Mammary epithelial cell (primary cell): ENCODE measurements at regions of chr1 and their contacts with region 1.

Region 1: DNA sequence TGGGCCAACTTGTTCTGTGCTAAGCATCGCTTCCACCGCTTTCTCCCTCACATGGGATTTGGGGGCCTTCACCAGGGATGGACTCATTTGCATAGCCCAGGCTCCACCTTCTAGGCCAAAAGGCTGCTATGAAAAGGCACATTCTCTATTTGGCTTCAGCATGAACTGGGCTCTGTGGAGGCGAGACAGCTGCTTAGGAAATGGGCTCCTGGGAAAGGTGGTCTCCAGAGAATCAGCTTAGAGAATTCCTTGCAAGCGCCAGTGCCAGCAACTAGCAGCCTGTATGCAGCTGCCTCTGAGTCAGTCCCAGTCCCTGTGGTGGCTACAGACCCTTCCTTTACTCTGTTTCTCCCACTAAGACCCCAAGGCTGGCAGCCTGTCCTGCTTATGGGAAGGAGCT is 214.5 kb downstream of the HIVEP3 start:
- DNase-seq: no peak
- H3K4me3 ChIP-seq: no peak overlapping the region
- H3K27ac ChIP-seq: no peak overlapping the region
- H3K4me1 ChIP-seq: no peaks in the 10 kb centered on the region
- H3K27me3 ChIP-seq: no peaks in the 10 kb centered on the region
- CTCF ChIP-seq: no peak

Region 2: GRCh38 chr1:41731516-41732030 is 27.4 kb after region 1 on chr1:
- CTCF ChIA-PET with region 1: no interaction called
- dilution Hi-C with region 1: no loop called
- in situ Hi-C with region 1: no loop called
- intact Hi-C with region 1: no loop called
- DNase-seq: no peak
- H3K4me3 ChIP-seq: no peak overlapping the region
- H3K27ac ChIP-seq: no peak overlapping the region
- H3K4me1 ChIP-seq: no peaks in the 10 kb centered on the region
- H3K27me3 ChIP-seq: no peaks in the 10 kb centered on the region
- CTCF ChIP-seq: no peak

Region 3: DNA sequence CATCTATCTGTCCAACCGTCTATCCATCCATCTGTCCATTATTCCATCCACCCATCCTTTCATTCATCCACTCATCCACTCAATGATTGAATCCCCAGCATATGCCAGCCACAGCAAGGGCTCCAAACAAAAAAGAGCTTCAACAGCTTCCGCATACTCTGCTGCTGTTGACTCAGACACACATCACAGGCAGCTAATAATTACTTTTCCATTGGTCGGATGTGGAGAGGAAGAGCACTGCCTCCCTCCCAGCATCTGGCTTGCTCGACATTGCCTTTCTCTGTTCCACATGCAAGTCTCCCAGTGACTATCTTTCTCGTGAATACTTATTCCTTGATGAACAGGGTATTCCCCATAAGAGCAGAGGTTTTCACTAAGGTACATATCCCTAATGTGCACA is 38.0 kb after region 1 on chr1:
- CTCF ChIA-PET with region 1: no interaction called
- dilution Hi-C with region 1: loop called (anchors 5 kb)
- in situ Hi-C with region 1: no loop called
- intact Hi-C with region 1: no loop called
- DNase-seq: no peak
- H3K4me3 ChIP-seq: no peak overlapping the region
- H3K27ac ChIP-seq: no peak overlapping the region
- H3K4me1 ChIP-seq: peaks cover 10% of the 10 kb centered on the region
- H3K27me3 ChIP-seq: no peaks in the 10 kb centered on the region
- CTCF ChIP-seq: no peak

Region 4: DNA sequence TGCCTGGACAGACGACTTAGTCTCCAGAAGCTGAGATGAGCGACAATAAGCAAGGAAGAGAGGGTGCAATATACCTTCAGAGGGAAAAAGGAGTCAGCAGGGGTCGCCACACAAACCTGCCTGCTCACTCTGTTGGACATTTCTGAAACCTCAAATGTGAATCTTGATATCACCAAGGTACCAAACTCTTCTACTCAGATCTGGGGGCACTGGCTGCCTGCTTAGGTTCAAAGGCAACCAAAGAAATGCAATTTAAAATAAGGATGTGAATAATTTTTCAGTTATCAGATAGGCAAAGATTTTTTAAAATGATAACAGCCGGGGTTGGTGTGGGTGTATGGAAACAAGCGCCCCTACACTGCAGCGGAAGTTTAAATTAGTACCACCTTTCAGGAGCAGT is 50.3 kb after region 1 on chr1:
- CTCF ChIA-PET with region 1: no interaction called
- dilution Hi-C with region 1: no loop called
- in situ Hi-C with region 1: no loop called
- intact Hi-C with region 1: no loop called
- DNase-seq: no peak
- H3K4me3 ChIP-seq: no peak overlapping the region
- H3K27ac ChIP-seq: no peak overlapping the region
- H3K4me1 ChIP-seq: peaks cover 7% of the 10 kb centered on the region
- H3K27me3 ChIP-seq: no peaks in the 10 kb centered on the region
- CTCF ChIP-seq: peak in 1 of 2 donors; percentile 20